Dendritic cell treated with granulocyte-macrophage colony-stimulating factor and Interleukin-4, amounts not matched to agents 40 ng/mL and 50 ng/mL, for 4 days (primary cell): ENCODE measurements at regions of chr14 and their contacts with region 1.

Region 1: DNA sequence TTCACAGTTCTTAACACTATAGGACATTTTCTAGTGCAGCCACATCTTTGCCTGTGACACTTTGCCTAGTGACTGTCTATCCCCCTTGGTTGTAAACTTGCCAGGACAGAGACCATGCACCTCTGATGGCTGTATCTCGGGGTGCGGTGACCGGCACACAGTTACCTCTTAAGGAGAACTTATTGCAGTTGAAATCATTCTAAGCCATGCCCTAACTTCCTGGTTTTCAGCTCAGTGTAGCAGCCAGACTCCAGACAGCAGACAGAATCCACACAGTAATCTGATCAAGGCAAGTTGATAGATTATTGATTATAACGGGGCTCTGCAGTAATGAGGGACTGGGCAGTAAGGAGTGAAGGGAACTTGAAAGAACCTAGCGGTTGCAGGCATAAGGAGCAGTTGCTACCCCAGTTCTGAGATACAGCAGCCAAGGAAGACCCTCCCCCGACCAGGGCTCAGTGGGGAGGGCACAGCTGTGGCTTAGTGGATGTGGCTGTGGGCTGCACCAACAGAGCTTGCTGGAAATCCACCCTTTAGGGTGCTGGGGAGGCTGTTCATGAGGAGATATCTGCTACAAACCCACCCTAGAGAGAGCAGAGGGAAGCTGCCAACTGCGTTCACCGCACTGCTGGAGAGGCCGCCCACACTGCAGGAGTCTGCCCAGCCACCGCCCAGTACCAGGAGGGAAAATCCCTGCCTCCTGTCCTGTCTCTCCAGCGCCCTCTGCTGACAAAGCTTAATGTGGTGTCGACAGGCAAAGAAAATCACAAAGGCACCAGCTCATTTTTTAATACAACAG is 58.2 kb upstream of the BEGAIN start:
- H3K4me3 Mint-ChIP-seq: peak overlapping the region; percentile 7
- H3K27ac Mint-ChIP-seq: peak overlapping the region; percentile 38
- H3K4me1 Mint-ChIP-seq: peaks cover 21% of the 10 kb centered on the region
- H3K27me3 Mint-ChIP-seq: peaks cover 46% of the 10 kb centered on the region

Region 2: DNA sequence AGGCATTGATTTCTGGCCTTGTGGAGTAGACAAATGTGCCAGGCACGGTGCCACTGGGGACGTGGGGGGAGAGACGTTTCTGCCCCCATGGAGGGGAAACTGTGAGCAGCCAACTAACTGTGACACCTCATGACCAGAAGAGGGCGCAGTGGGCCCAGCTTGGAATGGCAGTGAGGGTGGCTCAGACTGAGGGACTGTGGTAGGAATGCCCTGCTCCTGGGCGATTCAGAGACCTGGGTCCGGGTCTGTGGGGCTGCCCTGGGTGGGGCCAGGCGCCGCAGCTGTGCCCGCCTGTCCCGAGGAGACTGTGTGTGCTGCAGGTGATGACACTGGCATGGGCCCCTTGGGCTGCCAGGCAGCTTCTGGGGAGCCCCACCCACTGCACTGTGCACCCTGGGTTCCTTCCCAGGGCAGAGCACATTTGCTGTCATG is 261.6 kb before region 1 on chr14:
- intact Hi-C with region 1: loop called (anchors 1 kb)
- H3K4me3 Mint-ChIP-seq: no peak overlapping the region
- H3K27ac Mint-ChIP-seq: peak overlapping the region; percentile 62
- H3K4me1 Mint-ChIP-seq: peaks cover 14% of the 10 kb centered on the region
- H3K27me3 Mint-ChIP-seq: no peaks in the 10 kb centered on the region

Region 3: GRCh38 chr14:100440187-100440631 is 205.2 kb before region 1 on chr14:
- intact Hi-C with region 1: loop called (anchors 2 kb)
- H3K4me3 Mint-ChIP-seq: no peak overlapping the region
- H3K27ac Mint-ChIP-seq: no peak overlapping the region
- H3K4me1 Mint-ChIP-seq: peaks cover 23% of the 10 kb centered on the region
- H3K27me3 Mint-ChIP-seq: no peaks in the 10 kb centered on the region

Region 4: DNA sequence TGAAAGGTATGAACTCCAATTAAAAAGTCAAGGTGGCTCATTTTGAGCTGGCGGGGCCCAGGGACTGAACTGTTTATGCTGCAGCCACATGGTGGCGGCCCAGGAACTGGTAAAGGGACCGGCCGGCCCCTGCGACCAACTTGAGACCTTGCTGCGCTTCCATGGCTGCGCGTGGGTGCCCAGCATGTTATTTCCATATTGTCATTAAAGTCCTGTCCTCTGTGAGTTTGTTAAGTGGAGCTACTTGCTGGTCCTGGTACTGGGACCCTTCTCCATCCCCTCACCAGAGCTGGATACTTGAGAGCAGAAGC is 120.5 kb before region 1 on chr14:
- intact Hi-C with region 1: loop called (anchors 1 kb)
- H3K4me3 Mint-ChIP-seq: no peak overlapping the region
- H3K27ac Mint-ChIP-seq: no peak overlapping the region
- H3K4me1 Mint-ChIP-seq: no peaks in the 10 kb centered on the region
- H3K27me3 Mint-ChIP-seq: no peaks in the 10 kb centered on the region